ENCODE measurements at regions of chr16 and their contacts with region 1.

Region 1: GRCh38 chr16:49855280-49855821 is 561 bp downstream of the ZNF423 start:
- DNase-seq: peak; percentile 69
- H3K4me3 Mint-ChIP-seq: peak overlapping the region; percentile 58
- H3K27ac Mint-ChIP-seq: no peak overlapping the region
- H3K4me1 Mint-ChIP-seq: peaks cover 10% of the 10 kb centered on the region
- H3K27me3 Mint-ChIP-seq: peaks cover 40% of the 10 kb centered on the region

Region 2: GRCh38 chr16:49844359-49844758 is 11.0 kb before region 1 on chr16:
- CTCF ChIA-PET with region 1: interaction called, 14 read pairs
- intact Hi-C with region 1: no loop called
- DNase-seq: no peak
- H3K4me3 Mint-ChIP-seq: no peak overlapping the region
- H3K27ac Mint-ChIP-seq: no peak overlapping the region
- H3K4me1 Mint-ChIP-seq: no peaks in the 10 kb centered on the region
- H3K27me3 Mint-ChIP-seq: peaks cover 15% of the 10 kb centered on the region

Region 3: GRCh38 chr16:49921791-49922456 is 66.6 kb after region 1 on chr16:
- CTCF ChIA-PET with region 1: interaction called, 3 read pairs
- intact Hi-C with region 1: loop called (anchors 1 kb)
- DNase-seq: peak; percentile 70
- H3K4me3 Mint-ChIP-seq: no peak overlapping the region
- H3K27ac Mint-ChIP-seq: no peak overlapping the region
- H3K4me1 Mint-ChIP-seq: no peaks in the 10 kb centered on the region
- H3K27me3 Mint-ChIP-seq: peaks cover 3% of the 10 kb centered on the region

Measured in activated naive CD4-positive, alpha-beta T cell treated with anti-CD3 and anti-CD28 coated beads for 36 hours (primary cell).